PC-3 (cell line): ENCODE measurements at regions of chr5 and their contacts with region 1.

Region 1: GRCh38 chr5:108919591-108920326 is 172.1 kb downstream of the FER start:
- DNase-seq: peak; percentile 54
- ATAC-seq: no peak
- H3K4me3 ChIP-seq: no peak overlapping the region
- H3K27ac ChIP-seq: no peak overlapping the region
- H3K4me1 ChIP-seq: no peaks in the 10 kb centered on the region
- H3K27me3 ChIP-seq: no peaks in the 10 kb centered on the region
- CTCF ChIP-seq: peak; percentile 73

Region 2: DNA sequence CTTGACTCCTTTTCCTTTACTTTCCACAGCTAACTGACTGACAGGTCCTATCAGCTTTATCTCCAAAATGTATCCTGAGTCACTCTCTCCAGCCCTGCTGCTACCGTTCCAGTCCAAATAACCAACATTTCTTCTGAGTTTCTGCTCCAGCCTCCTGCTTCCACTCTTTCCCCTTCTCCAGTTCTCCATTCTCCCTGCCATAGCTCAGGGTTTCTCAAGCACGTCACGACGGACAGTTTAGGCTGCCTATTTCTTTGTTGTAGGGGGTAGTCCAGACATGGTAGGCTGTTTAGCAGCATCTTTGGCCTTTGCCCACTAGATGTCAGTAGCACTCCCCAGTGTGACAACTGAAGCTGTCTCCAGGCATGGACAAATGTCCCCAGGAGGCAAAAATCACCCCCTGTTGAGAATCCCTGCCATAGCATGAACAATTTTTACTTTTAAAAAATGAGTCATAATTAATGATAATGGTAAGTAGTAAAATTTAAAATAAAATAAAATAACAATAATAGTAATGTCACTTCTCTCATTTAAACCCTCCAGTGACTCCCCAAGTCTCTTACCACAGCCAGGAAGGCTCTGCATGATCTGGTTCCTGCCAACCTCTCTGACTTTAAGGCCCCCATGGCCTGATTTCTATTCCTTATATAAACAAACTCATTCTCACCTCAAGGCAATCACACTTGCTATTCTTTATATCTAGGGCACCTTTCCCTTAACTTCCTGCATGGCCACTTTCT is 277.4 kb before region 1 on chr5:
- CTCF ChIA-PET with region 1: no interaction called
- POLR2A ChIA-PET with region 1: no interaction called
- intact Hi-C with region 1: loop called (anchors 5 kb)
- DNase-seq: peak; percentile 82
- ATAC-seq: peak; percentile 97
- H3K4me3 ChIP-seq: no peak overlapping the region; the same call in 1 of the 2 replicates
- H3K27ac ChIP-seq: no peak overlapping the region
- H3K4me1 ChIP-seq: 0 out of 2 replicates have a peak, but pooled peaks cover under 1% of the 10 kb centered on the region
- H3K27me3 ChIP-seq: no peaks in the 10 kb centered on the region
- CTCF ChIP-seq: peak; percentile 88

Region 3: GRCh38 chr5:109078448-109078847 is 158.7 kb after region 1 on chr5:
- CTCF ChIA-PET with region 1: no interaction called
- POLR2A ChIA-PET with region 1: no interaction called
- intact Hi-C with region 1: loop called (anchors 10 kb)
- DNase-seq: peak; percentile 22
- ATAC-seq: peak; percentile 91
- H3K4me3 ChIP-seq: no peak overlapping the region
- H3K27ac ChIP-seq: no peak overlapping the region
- H3K4me1 ChIP-seq: no peaks in the 10 kb centered on the region
- H3K27me3 ChIP-seq: no peaks in the 10 kb centered on the region
- CTCF ChIP-seq: no peak

Region 4: GRCh38 chr5:109439590-109439989 is 519.8 kb after region 1 on chr5:
- CTCF ChIA-PET with region 1: no interaction called
- POLR2A ChIA-PET with region 1: no interaction called
- intact Hi-C with region 1: loop called (anchors 2 kb)
- DNase-seq: no peak
- ATAC-seq: no peak
- H3K4me3 ChIP-seq: no peak overlapping the region
- H3K27ac ChIP-seq: no peak overlapping the region
- H3K4me1 ChIP-seq: no peaks in the 10 kb centered on the region
- H3K27me3 ChIP-seq: no peaks in the 10 kb centered on the region
- CTCF ChIP-seq: no peak